CD14-positive monocyte (primary cell): ENCODE measurements at regions of chr7 and their contacts with region 1.

Region 1: GRCh38 chr7:106346678-106347217 is 62.0 kb upstream of the NAMPT start:
- DNase-seq: peak; percentile 94 to 99 (median 98)
- H3K4me3 ChIP-seq: peak overlapping the region in 1 of 3 experiments; percentile 21
- H3K4me3 Mint-ChIP-seq: peak overlapping the region; percentile 21 to 48
- H3K27ac ChIP-seq: peak overlapping the region; percentile 59 to 97
- H3K27ac Mint-ChIP-seq: peak overlapping the region; percentile 96 to 99 (median 98)
- H3K4me1 ChIP-seq: peaks cover 40 to 43% of the 10 kb centered on the region in 2 donors
- H3K4me1 Mint-ChIP-seq: peaks cover 44% of the 10 kb centered on the region
- H3K27me3 ChIP-seq: peaks cover 0 to 4% of the 10 kb centered on the region in 2 donors
- H3K27me3 Mint-ChIP-seq: peaks cover 1 to 11% (median 2%) of the 10 kb centered on the region in 3 donors
- CTCF ChIP-seq: no peak

Region 2: GRCh38 chr7:106309362-106309761 is 37.4 kb before region 1 on chr7:
- intact Hi-C with region 1: loop called in 1 of 2 experiments (anchors 5 kb)
- DNase-seq: peak; percentile 14 to 33 (median 24)
- H3K4me3 ChIP-seq: no peak overlapping the region
- H3K4me3 Mint-ChIP-seq: no peak overlapping the region
- H3K27ac ChIP-seq: no peak overlapping the region
- H3K27ac Mint-ChIP-seq: peak overlapping the region in 1 of 7 donors; percentile 73
- H3K4me1 ChIP-seq: peaks cover 17 to 20% of the 10 kb centered on the region in 2 donors
- H3K4me1 Mint-ChIP-seq: peaks cover 22% of the 10 kb centered on the region
- H3K27me3 ChIP-seq: no peaks in the 10 kb centered on the region
- H3K27me3 Mint-ChIP-seq: peaks cover 1 to 7% (median 1%) of the 10 kb centered on the region in 3 donors
- CTCF ChIP-seq: no peak

Region 3: GRCh38 chr7:106425017-106425719 is 78.4 kb after region 1 on chr7:
- intact Hi-C with region 1: loop called (anchors 1 to 5 kb)
- DNase-seq: peak; percentile 98 to 100 (median 99)
- H3K4me3 ChIP-seq: peak overlapping the region in 2 of 3 experiments; percentile 10 to 14
- H3K4me3 Mint-ChIP-seq: peak overlapping the region; percentile 46 to 52
- H3K27ac ChIP-seq: peak overlapping the region; percentile 86 to 96
- H3K27ac Mint-ChIP-seq: peak overlapping the region; percentile 98 to 100 (median 99)
- H3K4me1 ChIP-seq: peaks cover 49 to 57% of the 10 kb centered on the region in 2 donors
- H3K4me1 Mint-ChIP-seq: peaks cover 56% of the 10 kb centered on the region
- H3K27me3 ChIP-seq: no peaks in the 10 kb centered on the region
- H3K27me3 Mint-ChIP-seq: peaks cover 0 to 2% (median 0%) of the 10 kb centered on the region in 3 donors
- CTCF ChIP-seq: no peak